ENCODE measurements at regions of chr21 and their contacts with region 1.

Region 1: DNA sequence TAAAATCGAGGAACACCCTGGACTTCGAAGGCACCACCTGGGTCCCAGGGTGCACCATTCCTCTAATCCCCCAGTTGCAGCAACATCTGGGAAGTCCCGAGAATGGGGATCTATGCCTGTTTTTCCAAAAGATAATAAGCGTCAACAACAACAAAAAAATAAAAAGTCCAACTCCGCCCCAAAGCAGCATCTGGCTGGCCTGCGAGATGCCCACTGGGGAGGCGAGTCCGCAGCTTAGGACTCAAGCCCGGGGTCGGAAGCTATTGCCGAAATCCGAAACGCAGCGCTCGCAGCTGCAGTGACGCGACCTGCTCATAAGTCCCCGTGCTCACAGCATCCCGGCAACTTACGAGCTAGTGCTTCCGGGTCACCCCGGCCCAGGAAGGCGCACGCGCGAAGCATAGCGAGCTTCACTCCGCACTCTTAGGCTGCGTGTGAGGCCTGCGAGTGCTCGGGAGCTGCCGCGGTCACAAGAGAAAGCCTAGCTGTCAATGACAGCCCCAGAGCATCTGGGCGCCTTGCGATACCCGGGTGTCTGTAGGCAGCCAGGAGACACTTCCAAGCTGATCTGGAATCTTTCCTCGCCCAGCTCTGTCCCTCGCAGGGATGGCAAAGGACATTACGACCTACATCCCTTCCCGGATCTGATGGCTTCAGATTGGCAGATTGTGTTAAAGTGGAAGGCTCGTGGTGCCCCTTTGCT is 9.9 kb upstream of the LTN1 start:
- DNase-seq: peak; percentile 95 to 98
- H3K4me3 ChIP-seq: peak overlapping the region; percentile 57 to 65
- H3K27ac ChIP-seq: peak overlapping the region; percentile 84 to 90
- H3K4me1 ChIP-seq: peaks cover 0 to 13% (median 4%) of the 10 kb centered on the region in 4 donors
- H3K27me3 ChIP-seq: no peaks in the 10 kb centered on the region
- CTCF ChIP-seq: no peak

Region 2: DNA sequence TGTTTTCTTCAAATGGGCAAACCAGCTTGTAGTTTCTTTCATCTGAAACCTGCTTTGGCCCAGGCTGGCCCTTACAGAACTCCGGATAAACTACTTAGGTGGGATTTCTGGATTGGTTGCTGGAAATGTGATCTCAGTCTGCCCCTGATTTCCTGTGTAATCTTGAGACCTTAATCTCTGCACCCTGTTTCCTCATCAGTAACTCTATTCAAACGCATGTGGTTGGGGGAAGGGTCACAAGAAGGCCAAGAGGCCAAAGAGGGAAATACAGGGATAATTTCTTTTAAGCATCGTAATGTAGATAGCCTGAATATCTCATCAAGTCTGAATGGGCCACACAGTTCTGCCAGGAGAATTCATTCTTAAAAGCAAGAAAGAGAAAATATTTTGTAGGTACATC is 493.6 kb before region 1 on chr21:
- intact Hi-C with region 1: no loop called
- DNase-seq: no peak
- H3K4me3 ChIP-seq: no peak overlapping the region
- H3K27ac ChIP-seq: no peak overlapping the region
- H3K4me1 ChIP-seq: no peaks in the 10 kb centered on the region
- H3K27me3 ChIP-seq: no peaks in the 10 kb centered on the region
- CTCF ChIP-seq: no peak

Region 3: GRCh38 chr21:28604946-28605537 is 397.6 kb before region 1 on chr21:
- intact Hi-C with region 1: no loop called
- DNase-seq: no peak
- H3K4me3 ChIP-seq: no peak overlapping the region
- H3K27ac ChIP-seq: no peak overlapping the region
- H3K4me1 ChIP-seq: no peaks in the 10 kb centered on the region
- H3K27me3 ChIP-seq: no peaks in the 10 kb centered on the region
- CTCF ChIP-seq: no peak

Region 4: DNA sequence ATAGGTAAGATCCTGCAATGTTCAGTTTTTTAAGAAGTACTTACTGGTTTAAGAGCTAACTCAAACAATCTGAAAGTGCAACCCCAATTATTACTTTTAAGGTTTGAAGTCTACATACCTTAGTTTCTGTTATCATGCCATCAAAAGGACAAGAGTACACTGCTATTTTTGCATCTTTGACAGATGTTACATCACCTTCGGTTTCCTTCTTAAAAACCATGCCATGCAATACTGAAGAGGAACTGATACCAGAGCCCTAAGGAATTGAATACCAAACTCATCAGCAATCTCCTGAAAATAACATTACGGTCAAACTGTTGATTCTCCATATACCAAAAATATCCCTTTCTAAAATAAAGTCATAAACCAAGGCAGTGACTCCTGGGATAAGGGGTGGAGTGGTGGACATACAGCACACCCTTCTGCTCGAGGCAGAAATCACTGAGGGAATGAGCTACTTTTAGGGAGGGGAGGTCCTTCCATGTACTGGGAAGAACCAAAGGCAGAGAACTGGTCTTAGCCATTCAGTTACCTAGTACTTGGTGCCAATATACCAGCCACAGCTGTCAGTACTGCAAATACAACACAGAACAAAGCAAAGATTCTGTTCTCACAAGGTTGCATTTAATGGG is 62.4 kb after region 1 on chr21:
- intact Hi-C with region 1: loop called (anchors 10 kb)
- DNase-seq: no peak
- H3K4me3 ChIP-seq: no peak overlapping the region
- H3K27ac ChIP-seq: peak overlapping the region in 1 of 2 donors; percentile 7
- H3K4me1 ChIP-seq: peaks cover 0 to 11% (median 4%) of the 10 kb centered on the region in 4 donors
- H3K27me3 ChIP-seq: no peaks in the 10 kb centered on the region
- CTCF ChIP-seq: no peak

Region 5: GRCh38 chr21:29091032-29091431 is 88.4 kb after region 1 on chr21:
- intact Hi-C with region 1: no loop called
- DNase-seq: no peak
- H3K4me3 ChIP-seq: no peak overlapping the region
- H3K27ac ChIP-seq: peak overlapping the region; percentile 22 to 61
- H3K4me1 ChIP-seq: peaks cover 0 to 42% (median 13%) of the 10 kb centered on the region in 4 donors
- H3K27me3 ChIP-seq: no peaks in the 10 kb centered on the region
- CTCF ChIP-seq: no peak

Measured in tibial artery (tissue), 4 donors.